ENCODE measurements at regions of chr1 and their contacts with region 1.

Region 1: GRCh38 chr1:110872745-110873720 is at the start of gene CD53:
- DNase-seq: peak; percentile 46 to 88
- ATAC-seq: peak; percentile 63 to 82 (median 78)
- H3K4me3 ChIP-seq: peak within 1 kb of the TSS; percentile 71
- H3K4me3 Mint-ChIP-seq: peak within 1 kb of the TSS; percentile 99
- H3K27ac ChIP-seq: peak within 1 kb of the TSS; percentile 94
- H3K27ac Mint-ChIP-seq: peak within 1 kb of the TSS; percentile 92 to 99
- H3K4me1 ChIP-seq: peaks cover 22% of the 10 kb centered on the region
- H3K4me1 Mint-ChIP-seq: peaks cover 48 to 77% of the 10 kb centered on the region in 2 donors
- H3K27me3 ChIP-seq: no peaks in the 10 kb centered on the region
- H3K27me3 Mint-ChIP-seq: no peaks in the 10 kb centered on the region
- CTCF ChIP-seq: no peak
- total RNA-seq, gene CD53: 522 to 584 (median 541) TPM

Region 2: GRCh38 chr1:111592389-111593361 is 719.6 kb after region 1 on chr1:
- intact Hi-C with region 1: loop called (anchors 10 kb)
- DNase-seq: peak; percentile 75 to 91
- ATAC-seq: peak; percentile 85 to 92 (median 92)
- H3K4me3 ChIP-seq: no peak overlapping the region
- H3K4me3 Mint-ChIP-seq: peak overlapping the region; percentile 77
- H3K27ac ChIP-seq: peak overlapping the region; percentile 86
- H3K27ac Mint-ChIP-seq: peak overlapping the region; percentile 78 to 89
- H3K4me1 ChIP-seq: peaks cover 54% of the 10 kb centered on the region
- H3K4me1 Mint-ChIP-seq: peaks cover 54% of the 10 kb centered on the region in 2 donors
- H3K27me3 ChIP-seq: no peaks in the 10 kb centered on the region
- H3K27me3 Mint-ChIP-seq: no peaks in the 10 kb centered on the region
- CTCF ChIP-seq: no peak